Aorta (tissue), 5 donors: ENCODE measurements at regions of chr2 and their contacts with region 1.

Region 1: DNA sequence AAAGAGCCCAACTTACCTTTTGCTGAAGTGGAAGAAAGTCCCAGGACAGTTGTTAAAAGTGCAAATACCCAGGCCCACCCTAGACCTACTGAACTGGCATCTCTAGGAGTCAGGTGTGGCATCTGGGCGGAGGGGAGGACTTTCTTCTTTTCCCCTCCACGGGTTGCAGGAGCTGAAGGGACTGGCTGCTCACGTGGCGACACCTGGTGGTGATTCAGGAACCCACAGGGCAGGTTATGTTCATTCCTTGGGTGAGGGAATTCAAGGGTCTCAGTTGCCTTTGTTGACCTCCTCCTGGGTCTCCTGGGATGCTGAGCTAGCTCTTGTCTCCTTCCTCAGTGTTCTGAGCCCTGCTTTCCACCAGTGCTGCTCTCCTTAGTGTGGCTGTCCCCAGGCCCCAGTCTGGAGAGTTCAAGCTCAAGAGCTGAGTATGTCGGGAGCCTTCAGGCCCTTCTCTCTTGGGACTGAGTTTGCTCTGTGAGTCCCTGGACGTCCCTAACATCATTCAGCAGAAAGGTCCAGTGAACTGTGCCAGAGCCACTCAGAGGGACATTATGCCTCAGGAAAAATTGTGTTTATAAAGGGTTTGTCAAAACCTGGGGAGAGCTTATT is 56.9 kb downstream of the DYSF start:
- DNase-seq: peak; percentile 78 to 93
- ATAC-seq: peak; percentile 54
- H3K4me3 ChIP-seq: no peak overlapping the region
- H3K27ac ChIP-seq: no peak overlapping the region
- H3K4me1 ChIP-seq: no peaks in the 10 kb centered on the region
- H3K27me3 ChIP-seq: no peaks in the 10 kb centered on the region

Region 2: DNA sequence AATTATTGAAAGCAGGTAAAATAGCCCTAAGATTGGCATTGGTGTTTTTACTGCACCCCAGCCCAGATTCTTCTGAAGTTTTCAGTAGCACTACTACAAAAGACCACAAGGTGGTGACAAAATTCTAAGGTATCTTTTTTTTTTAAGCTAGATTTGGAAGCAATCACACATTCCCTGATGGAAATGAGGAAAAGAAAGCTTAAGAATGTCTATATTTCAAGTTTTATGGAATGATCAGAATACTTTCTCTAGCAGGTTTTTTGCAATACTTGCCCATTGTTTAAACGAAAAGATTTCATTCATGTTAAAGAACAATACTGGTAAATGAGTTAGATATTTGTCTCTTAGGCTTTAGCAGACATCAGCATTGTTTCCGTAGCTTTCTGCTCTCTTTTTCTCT is 210.8 kb before region 1 on chr2:
- intact Hi-C with region 1: loop called (anchors 1 to 2 kb)
- DNase-seq: no peak
- ATAC-seq: no peak
- H3K4me3 ChIP-seq: no peak overlapping the region
- H3K27ac ChIP-seq: no peak overlapping the region
- H3K4me1 ChIP-seq: no peaks in the 10 kb centered on the region
- H3K27me3 ChIP-seq: no peaks in the 10 kb centered on the region

Region 3: DNA sequence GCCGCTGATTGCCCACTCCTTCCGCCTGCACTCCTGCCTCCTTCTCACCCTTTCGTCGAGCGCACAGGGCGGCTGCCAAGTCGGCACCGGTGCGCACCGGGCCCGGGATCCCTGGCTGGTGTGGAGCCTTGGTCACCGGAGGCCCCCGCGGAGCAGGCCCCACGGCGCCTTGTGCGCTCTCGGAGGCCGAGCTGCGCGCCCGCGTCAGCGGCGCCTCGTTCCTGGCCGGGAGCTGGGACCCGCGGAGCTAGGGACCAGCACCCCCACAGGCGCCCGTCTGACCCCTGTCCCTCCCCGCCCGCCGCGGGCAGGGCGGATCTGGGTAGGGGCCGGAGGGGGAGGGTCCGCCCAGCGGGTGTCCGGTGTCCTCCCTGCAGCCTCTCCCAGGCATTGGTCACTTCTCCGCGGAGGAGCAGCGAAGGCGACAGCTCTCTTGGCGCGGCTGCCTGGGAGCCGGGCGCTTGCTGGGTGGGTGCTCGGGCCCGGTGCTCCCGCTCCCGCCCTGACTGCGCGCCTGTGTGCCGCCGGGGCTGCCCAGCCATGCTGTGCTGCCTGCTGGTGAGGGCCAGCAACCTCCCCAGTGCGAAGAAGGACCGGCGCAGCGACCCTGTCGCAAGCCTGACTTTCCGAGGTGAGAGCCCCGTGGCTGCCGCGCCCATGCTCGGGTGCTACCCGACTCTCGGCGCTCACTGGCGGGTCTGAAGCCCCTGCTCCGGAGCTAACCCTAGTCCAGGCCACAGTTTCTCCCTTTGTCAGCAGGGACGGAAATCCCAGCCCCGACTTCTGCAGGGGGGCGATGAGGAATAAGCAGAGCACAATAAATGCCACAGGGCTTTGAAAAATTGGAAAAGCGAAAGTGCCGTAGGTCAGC is 43.8 kb before region 1 on chr2:
- intact Hi-C with region 1: loop called in 1 of 2 experiments (anchors 2 kb)
- DNase-seq: peak; percentile 63 to 83
- ATAC-seq: peak; percentile 71
- H3K4me3 ChIP-seq: peak overlapping the region; percentile 20 to 69
- H3K27ac ChIP-seq: no peak overlapping the region
- H3K4me1 ChIP-seq: no peaks in the 10 kb centered on the region
- H3K27me3 ChIP-seq: no peaks in the 10 kb centered on the region